ENCODE measurements at regions of chr17 and their contacts with region 1.

Region 1: GRCh38 chr17:11803231-11803969 is 193.9 kb downstream of the ZNF18 start:
- DNase-seq: no peak
- ATAC-seq: no peak
- H3K4me3 ChIP-seq: no peak overlapping the region
- H3K27ac ChIP-seq: no peak overlapping the region
- H3K4me1 ChIP-seq: no peaks in the 10 kb centered on the region
- H3K27me3 ChIP-seq: no peaks in the 10 kb centered on the region
- CTCF ChIP-seq: no peak
- EP300 ChIP-seq: no peak
- POLR2A ChIP-seq: no peak
- RAD21 ChIP-seq: no peak

Region 2: DNA sequence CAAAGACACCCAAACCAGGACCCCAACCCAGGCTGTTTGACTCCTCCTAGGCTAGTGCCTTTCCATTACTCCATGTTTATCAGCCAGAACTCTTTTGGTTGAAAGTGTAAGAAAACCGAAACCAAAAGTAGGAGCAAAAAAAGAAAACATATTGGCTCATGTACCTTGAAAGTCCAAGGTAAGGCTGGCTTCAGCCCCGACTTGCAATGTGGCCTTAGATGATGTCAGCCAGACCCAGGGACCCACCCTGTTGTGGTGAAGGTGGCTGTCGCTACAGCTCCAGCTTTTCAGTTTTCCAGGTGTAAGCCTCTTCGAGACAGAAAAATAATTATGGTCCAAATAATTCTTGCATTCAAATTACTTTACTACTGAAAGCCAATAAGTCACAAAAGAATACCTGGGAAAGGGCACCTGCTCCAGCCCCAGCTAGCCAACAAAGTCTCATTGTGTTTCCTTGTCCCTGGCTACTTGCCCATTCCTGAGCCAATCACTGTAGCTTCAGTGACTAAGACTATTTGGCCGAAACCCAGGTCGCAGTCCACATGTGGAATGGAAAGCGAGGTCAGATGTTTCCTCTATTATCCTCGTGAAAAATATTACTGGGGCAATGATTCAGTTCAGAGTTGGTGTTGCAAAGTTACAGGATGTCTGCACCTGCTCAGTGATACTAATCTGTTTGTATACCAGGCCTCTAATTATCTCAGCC is 184.4 kb before region 1 on chr17:
- CTCF ChIA-PET with region 1: no interaction called
- POLR2A ChIA-PET with region 1: no interaction called
- RAD21 ChIA-PET with region 1: no interaction called
- SMC1A ChIA-PET with region 1: no interaction called
- in situ Hi-C with region 1: no loop called
- intact Hi-C with region 1: no loop called
- DNase-seq: no peak
- ATAC-seq: no peak
- H3K4me3 ChIP-seq: no peak overlapping the region
- H3K27ac ChIP-seq: no peak overlapping the region
- H3K4me1 ChIP-seq: no peaks in the 10 kb centered on the region
- H3K27me3 ChIP-seq: no peaks in the 10 kb centered on the region
- CTCF ChIP-seq: no peak
- EP300 ChIP-seq: no peak
- POLR2A ChIP-seq: no peak
- RAD21 ChIP-seq: no peak

Region 3: DNA sequence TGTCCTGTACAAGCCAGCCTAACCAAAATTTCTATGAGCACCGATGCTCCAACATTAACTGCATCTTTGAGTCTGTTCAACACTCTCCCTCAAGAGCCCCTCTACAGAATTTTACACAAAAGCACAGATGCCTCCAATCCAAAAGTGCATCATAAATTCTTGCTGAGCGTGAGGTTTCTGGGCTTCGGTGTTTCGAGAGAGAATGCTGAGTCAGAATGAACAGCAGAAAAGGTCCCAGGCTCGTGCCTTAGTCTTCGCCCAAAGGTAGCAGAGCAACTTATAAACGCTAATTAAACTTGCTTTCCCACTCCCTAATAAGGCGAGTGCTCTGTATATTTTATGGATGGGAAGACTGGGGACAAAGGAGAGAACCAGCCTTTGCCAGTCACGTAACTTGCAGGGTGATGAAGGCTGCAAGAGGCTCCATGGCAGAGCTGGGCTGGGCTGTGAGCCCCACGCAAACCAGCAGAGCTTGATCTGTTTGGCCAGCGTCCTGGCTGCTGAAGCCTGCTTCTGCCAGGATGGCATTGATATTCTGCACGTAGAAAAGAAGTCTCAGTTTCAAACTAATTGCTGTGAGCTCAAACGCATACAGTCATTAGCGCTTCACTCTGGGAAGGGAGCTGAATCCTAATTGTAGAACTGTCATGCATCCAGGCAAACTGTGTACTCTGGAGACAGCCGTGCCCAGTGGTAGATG is 66.6 kb before region 1 on chr17:
- CTCF ChIA-PET with region 1: no interaction called
- POLR2A ChIA-PET with region 1: no interaction called
- RAD21 ChIA-PET with region 1: no interaction called
- SMC1A ChIA-PET with region 1: no interaction called
- in situ Hi-C with region 1: loop called (anchors 10 kb)
- intact Hi-C with region 1: no loop called
- DNase-seq: no peak
- ATAC-seq: no peak
- H3K4me3 ChIP-seq: no peak overlapping the region
- H3K27ac ChIP-seq: no peak overlapping the region
- H3K4me1 ChIP-seq: no peaks in the 10 kb centered on the region
- H3K27me3 ChIP-seq: no peaks in the 10 kb centered on the region
- CTCF ChIP-seq: no peak
- EP300 ChIP-seq: no peak
- POLR2A ChIP-seq: no peak
- RAD21 ChIP-seq: no peak

Measured in GM12878 (cell line).